GM12878 (cell line): ENCODE measurements at regions of chr1 and their contacts with region 1.

Region 1: DNA sequence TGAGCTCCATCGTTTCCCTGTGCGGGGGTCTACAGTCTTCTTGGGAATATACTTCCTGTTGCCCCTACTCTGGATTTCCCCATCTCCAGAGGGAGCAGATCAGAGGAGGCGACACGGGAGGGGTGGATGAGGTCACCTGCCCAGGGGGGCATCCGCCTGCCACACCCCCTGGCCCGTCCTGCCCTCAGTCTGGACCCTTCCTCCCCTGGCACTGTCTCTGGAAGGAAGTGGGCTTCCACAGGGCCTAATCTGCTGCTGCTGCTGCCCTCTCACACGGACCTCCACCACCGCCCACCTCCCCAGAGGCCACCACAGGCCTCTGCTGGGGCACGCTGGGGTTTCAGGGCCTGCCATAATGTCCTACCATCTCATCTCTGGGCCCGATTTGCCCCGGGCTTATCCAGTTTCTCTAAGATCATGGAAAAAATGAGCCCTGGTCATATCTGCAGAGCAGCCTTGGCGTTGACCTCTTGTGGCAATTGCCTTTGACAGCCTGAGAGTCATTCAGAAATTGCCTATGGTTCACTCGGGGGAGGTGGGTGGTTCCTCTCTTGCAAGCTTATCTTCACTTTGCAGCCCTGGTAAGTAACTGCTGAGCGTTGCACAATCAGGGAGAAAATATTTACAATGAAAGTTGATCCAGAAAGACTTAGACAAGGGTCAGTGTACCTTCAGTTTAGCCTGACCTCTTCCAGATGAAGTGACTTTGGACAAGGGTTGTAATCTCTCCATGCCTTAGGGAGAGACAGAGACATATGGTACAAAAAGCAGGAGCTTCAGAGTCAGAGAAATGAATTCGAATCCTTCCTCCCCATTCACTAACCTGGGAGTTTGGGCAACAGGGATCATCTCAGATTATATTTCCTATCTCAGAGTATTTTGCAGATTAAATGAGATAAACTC is 252.4 kb downstream of the TOMM20 start:
- DNase-seq: no peak
- ATAC-seq: peak; percentile 50
- H3K4me3 ChIP-seq: no peak overlapping the region
- H3K27ac ChIP-seq: no peak overlapping the region
- H3K4me1 ChIP-seq: peaks cover 40% of the 10 kb centered on the region
- H3K27me3 ChIP-seq: no peaks in the 10 kb centered on the region
- CTCF ChIP-seq: no peak
- EP300 ChIP-seq: no peak
- POLR2A ChIP-seq: no peak
- RAD21 ChIP-seq: no peak

Region 2: DNA sequence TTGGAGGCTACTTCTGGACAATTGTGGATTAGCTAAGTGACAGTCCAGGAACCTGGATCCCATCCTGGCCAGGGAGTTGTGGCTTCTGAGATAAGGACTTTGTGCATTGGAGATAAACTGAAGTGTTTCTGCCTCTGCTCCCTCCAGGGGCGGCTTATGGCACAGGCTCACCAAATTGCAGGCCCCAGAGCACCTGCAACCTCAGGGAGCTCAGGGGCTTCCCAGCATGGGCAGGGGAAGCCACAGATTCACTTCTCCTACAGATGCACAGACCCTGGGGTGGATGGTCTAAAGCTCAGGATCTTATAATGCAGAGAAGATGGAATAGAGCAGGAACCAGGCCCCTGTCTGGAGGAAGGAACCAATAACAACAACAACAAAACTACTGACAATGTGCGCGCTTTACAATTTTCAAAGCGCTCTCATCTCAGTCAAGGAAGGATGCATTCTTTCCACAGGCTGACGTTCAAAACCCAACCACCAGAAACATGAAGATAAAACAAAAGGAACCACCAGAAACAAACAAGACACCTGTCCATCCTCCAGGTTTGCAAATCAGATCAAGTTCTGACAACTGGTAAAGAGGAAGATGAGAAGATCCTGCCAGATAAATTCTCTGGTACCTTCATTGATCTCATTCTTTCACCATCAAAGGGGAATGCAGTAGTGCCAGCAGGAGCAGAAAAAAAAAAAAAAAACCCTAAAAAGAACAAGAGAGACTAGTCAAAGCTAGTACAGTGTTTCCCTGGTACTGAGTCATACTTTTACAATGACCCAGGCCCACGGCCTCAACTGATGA is 145.2 kb before region 1 on chr1:
- CTCF ChIA-PET with region 1: no interaction called
- POLR2A ChIA-PET with region 1: interaction called, 6 read pairs
- RAD21 ChIA-PET with region 1: interaction called, 7 read pairs
- SMC1A ChIA-PET with region 1: interaction called, 5 read pairs
- in situ Hi-C with region 1: no loop called
- intact Hi-C with region 1: loop called (anchors 5 kb)
- DNase-seq: peak; percentile 68
- ATAC-seq: peak; percentile 80
- H3K4me3 ChIP-seq: peak overlapping the region; percentile 17; the same call in 1 of the 2 replicates
- H3K27ac ChIP-seq: peak overlapping the region; percentile 82
- H3K4me1 ChIP-seq: peaks cover 59% of the 10 kb centered on the region
- H3K27me3 ChIP-seq: no peaks in the 10 kb centered on the region
- CTCF ChIP-seq: peak; percentile 17 to 30 (median 28); a peak in 3 of 6 replicates
- EP300 ChIP-seq: peak; percentile 53 to 57; a peak in 3 of 4 replicates
- POLR2A ChIP-seq: no peak
- RAD21 ChIP-seq: peak; percentile 46; the same call in 1 of the 2 replicates